Ovary (tissue), 10 donors: ENCODE measurements at regions of chr16 and their contacts with region 1.

Region 1: GRCh38 chr16:83952940-83953795 is at the start of gene OSGIN1:
- DNase-seq: peak; percentile 92 to 96 (median 94)
- H3K4me3 ChIP-seq: peak within 1 kb of the TSS; percentile 61
- H3K27ac ChIP-seq: peak within 1 kb of the TSS; percentile 15 to 86
- H3K4me1 ChIP-seq: peaks cover 6% of the 10 kb centered on the region
- H3K27me3 ChIP-seq: no peaks in the 10 kb centered on the region
- CTCF ChIP-seq: peak in 1 of 3 donors; percentile 28
- EP300 ChIP-seq: no peak
- POLR2A ChIP-seq: peak; percentile 79
- total RNA-seq, gene OSGIN1: 2.0 to 9.3 (median 5.4) TPM

Region 2: GRCh38 chr16:83903751-83904150 is 49.4 kb before region 1 on chr16:
- intact Hi-C with region 1: loop called in 1 of 4 experiments (anchors 5 kb)
- DNase-seq: peak; percentile 57 to 78 (median 62)
- H3K4me3 ChIP-seq: no peak overlapping the region
- H3K27ac ChIP-seq: no peak overlapping the region
- H3K4me1 ChIP-seq: peaks cover 14% of the 10 kb centered on the region
- H3K27me3 ChIP-seq: no peaks in the 10 kb centered on the region
- CTCF ChIP-seq: no peak
- EP300 ChIP-seq: no peak
- POLR2A ChIP-seq: no peak

Region 3: DNA sequence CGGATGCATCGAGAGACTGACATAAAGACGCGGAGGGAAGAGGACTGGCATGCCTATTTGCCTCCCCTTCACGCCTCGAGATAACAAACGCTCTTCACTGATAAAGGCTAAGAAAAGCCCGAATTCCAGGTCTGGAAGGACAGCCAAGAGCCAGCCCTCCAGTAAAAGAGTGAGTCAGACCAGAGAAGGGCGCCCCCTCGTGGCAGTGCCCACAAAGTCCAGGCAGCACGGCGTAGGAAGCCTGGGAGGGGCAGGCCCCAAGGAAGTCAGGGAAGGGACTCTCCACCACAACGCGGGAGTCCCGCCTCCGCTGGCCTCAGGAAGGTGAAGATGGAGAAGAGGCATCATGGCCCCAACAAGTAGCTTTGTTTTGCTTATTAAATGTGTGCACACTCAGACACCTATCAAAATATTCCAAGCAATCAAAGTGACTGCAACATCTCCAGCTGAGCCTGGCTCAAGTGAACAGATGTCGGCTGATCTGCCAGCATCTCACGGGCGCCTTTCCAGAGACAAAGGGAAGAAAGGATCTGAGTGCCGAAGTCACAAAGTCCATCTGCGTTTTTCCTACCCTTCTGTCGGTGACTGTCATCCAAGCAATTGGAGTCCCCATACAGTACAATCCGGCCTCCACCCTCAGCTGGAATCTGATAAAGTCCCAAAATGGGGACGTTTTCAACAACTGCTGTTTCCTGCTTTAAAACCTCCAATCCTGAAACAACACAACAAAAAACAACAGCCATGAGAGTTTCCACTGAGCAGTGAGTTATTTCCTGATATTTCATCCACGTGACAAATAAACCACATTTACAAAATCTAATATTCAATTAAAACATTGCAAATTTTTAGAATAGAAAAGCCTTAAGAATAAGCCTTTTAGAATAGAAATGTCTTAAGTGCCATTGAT is 109.8 kb after region 1 on chr16:
- intact Hi-C with region 1: loop called in 1 of 4 experiments (anchors 5 kb)
- DNase-seq: peak; percentile 53 to 81 (median 71)
- H3K4me3 ChIP-seq: no peak overlapping the region
- H3K27ac ChIP-seq: no peak overlapping the region
- H3K4me1 ChIP-seq: no peaks in the 10 kb centered on the region
- H3K27me3 ChIP-seq: no peaks in the 10 kb centered on the region
- CTCF ChIP-seq: peak; percentile 41 to 59 (median 51)
- EP300 ChIP-seq: no peak
- POLR2A ChIP-seq: no peak

Region 4: GRCh38 chr16:84186685-84187437 is 233.7 kb after region 1 on chr16 and contains the start of gene TAF1C:
- intact Hi-C with region 1: loop called in 1 of 4 experiments (anchors 5 kb)
- DNase-seq: peak; percentile 87 to 96 (median 93)
- H3K4me3 ChIP-seq: peak within 1 kb of the TSS; percentile 82
- H3K27ac ChIP-seq: peak within 1 kb of the TSS; percentile 36 to 53
- H3K4me1 ChIP-seq: peaks cover 9% of the 10 kb centered on the region
- H3K27me3 ChIP-seq: no peaks in the 10 kb centered on the region
- CTCF ChIP-seq: peak; percentile 95 to 98 (median 97)
- EP300 ChIP-seq: no peak
- POLR2A ChIP-seq: peak; percentile 24
- total RNA-seq, gene TAF1C: 39.7 to 89.0 (median 58.4) TPM

Region 5: GRCh38 chr16:84617791-84618580 is 664.8 kb after region 1 on chr16 and contains the start of gene COTL1:
- intact Hi-C with region 1: no loop called
- DNase-seq: peak; percentile 98 to 99 (median 99)
- H3K4me3 ChIP-seq: peak within 1 kb of the TSS; percentile 52
- H3K27ac ChIP-seq: peak within 1 kb of the TSS; percentile 57 to 66
- H3K4me1 ChIP-seq: peaks cover 22% of the 10 kb centered on the region
- H3K27me3 ChIP-seq: no peaks in the 10 kb centered on the region
- CTCF ChIP-seq: peak in 1 of 3 donors; percentile 8
- EP300 ChIP-seq: peak; percentile 40
- POLR2A ChIP-seq: peak; percentile 68
- total RNA-seq, gene COTL1: 13.8 to 46.4 (median 26.1) TPM

Region 6: GRCh38 chr16:85546695-85547448 is 1593.7 kb after region 1 on chr16:
- intact Hi-C with region 1: loop called in 1 of 4 experiments (anchors 5 kb)
- DNase-seq: no peak
- H3K4me3 ChIP-seq: no peak overlapping the region
- H3K27ac ChIP-seq: no peak overlapping the region
- H3K4me1 ChIP-seq: peaks cover 6% of the 10 kb centered on the region
- H3K27me3 ChIP-seq: no peaks in the 10 kb centered on the region
- CTCF ChIP-seq: no peak
- EP300 ChIP-seq: no peak
- POLR2A ChIP-seq: no peak